ENCODE measurements at regions of chr12 and their contacts with region 1.

Region 1: GRCh38 chr12:13595536-13596443 is 385.6 kb downstream of the GRIN2B start:
- DNase-seq: no peak
- H3K4me3 ChIP-seq: no peak overlapping the region
- H3K27ac ChIP-seq: no peak overlapping the region
- H3K4me1 ChIP-seq: no peaks in the 10 kb centered on the region
- H3K27me3 ChIP-seq: no peaks in the 10 kb centered on the region
- CTCF ChIP-seq: no peak
- POLR2A ChIP-seq: no peak

Region 2: GRCh38 chr12:13652105-13652504 is 56.3 kb after region 1 on chr12:
- intact Hi-C with region 1: no loop called
- DNase-seq: no peak
- H3K4me3 ChIP-seq: no peak overlapping the region
- H3K27ac ChIP-seq: no peak overlapping the region
- H3K4me1 ChIP-seq: no peaks in the 10 kb centered on the region
- H3K27me3 ChIP-seq: no peaks in the 10 kb centered on the region
- CTCF ChIP-seq: no peak
- POLR2A ChIP-seq: no peak

Region 3: GRCh38 chr12:14479004-14479403 is 883.2 kb after region 1 on chr12:
- intact Hi-C with region 1: loop called (anchors 5 kb)
- DNase-seq: no peak
- H3K4me3 ChIP-seq: no peak overlapping the region
- H3K27ac ChIP-seq: no peak overlapping the region
- H3K4me1 ChIP-seq: no peaks in the 10 kb centered on the region
- H3K27me3 ChIP-seq: no peaks in the 10 kb centered on the region
- CTCF ChIP-seq: no peak
- POLR2A ChIP-seq: no peak

Measured in vagina (tissue), 2 donors.